ENCODE measurements at regions of chr4 and their contacts with region 1.

Region 1: DNA sequence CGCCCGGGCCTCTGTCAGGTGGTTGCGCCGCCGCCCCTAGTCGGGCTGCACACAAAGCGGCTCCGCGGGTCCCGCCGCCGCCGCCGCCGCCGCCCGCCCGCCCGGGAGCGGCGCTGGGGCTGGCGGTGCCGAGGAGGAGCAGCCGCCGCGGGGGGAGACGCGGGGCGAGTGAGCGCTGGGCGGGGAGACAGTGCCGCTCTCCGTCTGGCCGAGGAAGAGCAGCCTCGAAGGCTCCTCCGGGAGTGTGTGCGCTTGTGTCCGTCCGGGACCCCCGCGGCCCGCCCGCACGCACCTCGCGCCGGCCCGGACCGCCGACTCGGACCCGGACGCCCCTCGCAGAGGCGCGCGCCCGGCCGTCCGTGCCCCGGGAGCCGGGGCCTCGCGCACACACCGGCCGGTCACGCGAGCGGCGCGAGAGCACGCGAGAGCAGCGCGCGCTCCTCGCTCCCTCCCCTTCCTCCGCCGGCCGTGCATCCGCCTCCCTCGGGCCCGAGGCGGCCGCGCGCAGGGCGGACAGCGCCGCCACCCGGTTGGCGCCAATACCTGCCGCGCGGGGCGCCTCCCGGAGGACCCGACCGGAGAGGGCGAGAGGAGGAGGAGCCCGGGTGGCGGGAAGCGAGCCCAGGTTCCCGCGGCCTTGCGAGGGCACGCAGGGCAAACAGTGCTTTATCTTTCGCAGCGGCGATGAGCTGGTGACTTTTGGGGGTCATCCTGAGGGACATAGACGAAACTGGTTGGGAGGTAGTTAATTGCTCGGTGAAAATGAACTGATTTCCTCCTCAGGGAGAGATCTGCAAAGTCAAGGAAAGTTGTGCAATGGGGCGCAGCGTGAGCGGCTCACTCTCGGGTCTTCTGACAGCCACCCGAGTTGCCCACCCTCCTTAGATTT is at the start of gene PDS5A:
- DNase-seq: peak; percentile 98
- H3K4me3 Mint-ChIP-seq: peak within 1 kb of the TSS; percentile 95
- H3K27ac Mint-ChIP-seq: peak within 1 kb of the TSS; percentile 91
- H3K4me1 Mint-ChIP-seq: peaks cover 27% of the 10 kb centered on the region
- H3K27me3 Mint-ChIP-seq: no peaks in the 10 kb centered on the region
- total RNA-seq, gene PDS5A: 126 and 128 TPM in 2 replicates

Region 2: DNA sequence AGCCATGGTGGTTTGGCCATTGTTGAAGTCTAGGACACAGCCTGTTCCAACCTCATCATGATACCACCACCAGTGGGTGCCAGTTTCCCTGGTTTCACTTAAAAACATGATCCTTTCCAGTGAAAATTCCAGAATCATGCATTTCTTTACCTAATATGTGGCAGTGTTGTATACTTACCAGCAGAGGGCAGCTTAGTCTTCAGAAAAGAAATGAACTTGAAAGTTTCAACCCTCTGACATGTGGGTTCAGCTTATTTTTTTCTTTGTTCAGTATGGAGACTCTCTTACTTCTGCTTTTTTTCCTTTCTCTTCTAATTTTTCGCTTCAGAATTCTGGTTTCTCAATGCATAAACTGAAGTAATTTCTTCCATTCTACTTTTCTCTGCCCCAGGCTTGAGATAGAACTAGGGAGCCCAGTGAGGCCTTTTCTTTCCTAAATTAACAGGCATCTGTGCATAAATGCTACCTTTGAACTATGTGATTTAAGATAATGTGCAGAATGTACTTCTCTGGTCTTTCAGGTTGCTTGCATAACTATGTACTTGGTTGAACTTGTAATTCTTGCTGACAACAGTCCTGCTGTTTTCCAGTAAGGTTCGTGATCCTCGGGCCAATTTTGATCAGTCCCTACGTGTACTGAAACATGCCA is 508.2 kb before region 1 on chr4:
- intact Hi-C with region 1: loop called (anchors 1 kb)
- DNase-seq: peak; percentile 72
- H3K4me3 Mint-ChIP-seq: no peak overlapping the region
- H3K27ac Mint-ChIP-seq: peak overlapping the region; percentile 72
- H3K4me1 Mint-ChIP-seq: peaks cover 5% of the 10 kb centered on the region
- H3K27me3 Mint-ChIP-seq: no peaks in the 10 kb centered on the region

Region 3: GRCh38 chr4:39587881-39588280 is 389.9 kb before region 1 on chr4:
- intact Hi-C with region 1: no loop called
- DNase-seq: no peak
- H3K4me3 Mint-ChIP-seq: no peak overlapping the region
- H3K27ac Mint-ChIP-seq: no peak overlapping the region
- H3K4me1 Mint-ChIP-seq: no peaks in the 10 kb centered on the region
- H3K27me3 Mint-ChIP-seq: peaks cover 2% of the 10 kb centered on the region

Region 4: GRCh38 chr4:39638354-39639240 is 339.1 kb before region 1 on chr4 and contains the start of gene SMIM14:
- intact Hi-C with region 1: loop called (anchors 2 kb)
- DNase-seq: peak; percentile 97
- H3K4me3 Mint-ChIP-seq: peak within 1 kb of the TSS; percentile 90
- H3K27ac Mint-ChIP-seq: peak within 1 kb of the TSS; percentile 69
- H3K4me1 Mint-ChIP-seq: peaks cover 31% of the 10 kb centered on the region
- H3K27me3 Mint-ChIP-seq: peaks cover 31% of the 10 kb centered on the region
- total RNA-seq, gene SMIM14: 1.0 and 2.0 TPM in 2 replicates

Region 5: DNA sequence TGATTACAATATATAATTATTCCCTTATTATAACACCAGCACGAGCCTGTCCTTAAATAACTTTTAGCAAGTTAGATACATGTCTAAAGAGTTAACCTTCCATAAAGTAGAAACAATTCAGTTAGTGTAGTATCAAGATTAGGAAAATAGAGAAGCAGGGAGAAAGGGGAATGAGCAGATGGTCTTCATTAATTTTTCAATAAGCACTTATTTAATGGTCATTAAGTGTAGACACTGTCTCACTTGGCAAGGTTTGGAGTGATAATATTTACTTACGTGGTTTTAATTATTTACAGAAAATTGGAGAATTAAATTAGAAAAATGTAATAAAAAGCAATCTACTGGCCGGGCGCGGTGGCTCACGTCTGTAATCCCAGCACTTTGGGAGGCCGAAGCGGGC is 99.8 kb before region 1 on chr4:
- intact Hi-C with region 1: loop called (anchors 5 kb)
- DNase-seq: no peak
- H3K4me3 Mint-ChIP-seq: no peak overlapping the region
- H3K27ac Mint-ChIP-seq: no peak overlapping the region
- H3K4me1 Mint-ChIP-seq: peaks cover 26% of the 10 kb centered on the region
- H3K27me3 Mint-ChIP-seq: no peaks in the 10 kb centered on the region

Region 6: GRCh38 chr4:39933671-39934590 is 43.8 kb before region 1 on chr4:
- intact Hi-C with region 1: loop called (anchors 2 kb)
- DNase-seq: no peak
- H3K4me3 Mint-ChIP-seq: peak overlapping the region; percentile 21
- H3K27ac Mint-ChIP-seq: peak overlapping the region; percentile 37
- H3K4me1 Mint-ChIP-seq: peaks cover 42% of the 10 kb centered on the region
- H3K27me3 Mint-ChIP-seq: no peaks in the 10 kb centered on the region

Region 7: DNA sequence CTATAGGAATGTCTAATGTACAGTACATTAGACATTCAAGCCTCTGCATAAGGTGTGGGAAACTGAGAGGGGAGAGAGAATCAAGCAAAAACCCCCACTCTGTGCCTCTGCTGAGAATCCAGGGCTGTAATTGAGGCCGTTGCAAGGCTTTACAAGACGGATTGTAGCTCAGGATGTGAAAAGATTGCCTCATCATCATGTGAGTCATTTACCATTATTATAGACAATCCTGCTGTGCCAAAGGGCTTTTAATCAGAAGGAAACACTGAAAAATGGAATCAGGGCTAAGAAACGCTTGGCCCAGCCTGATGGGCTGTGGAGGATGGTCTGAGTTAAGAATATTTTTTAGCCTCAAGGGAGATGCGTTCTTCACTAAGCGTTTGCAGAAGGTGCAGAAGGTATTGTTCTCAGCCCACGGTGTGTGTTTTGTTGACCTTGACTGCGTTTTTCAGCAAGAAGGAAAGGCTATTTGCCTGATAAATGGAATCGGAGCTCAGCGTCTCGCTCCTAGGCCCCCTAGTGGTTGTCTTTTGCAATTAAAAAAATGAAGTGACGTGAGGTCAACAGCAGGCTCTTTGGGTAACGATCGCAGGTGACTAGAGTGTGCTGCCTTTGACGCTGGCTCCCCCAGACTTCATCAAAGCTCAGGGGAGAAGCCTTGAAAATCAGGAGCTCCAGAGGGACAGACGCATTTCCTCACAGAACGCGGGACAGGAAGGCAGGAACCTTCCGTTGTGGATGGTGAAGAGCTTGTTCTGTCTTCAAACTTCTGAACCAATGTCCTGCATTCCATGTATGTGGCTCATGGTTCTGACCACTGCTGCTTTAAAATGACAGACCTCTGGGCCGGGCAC is 339.3 kb after region 1 on chr4:
- intact Hi-C with region 1: loop called (anchors 5 kb)
- DNase-seq: peak; percentile 91
- H3K4me3 Mint-ChIP-seq: peak overlapping the region; percentile 91
- H3K27ac Mint-ChIP-seq: peak overlapping the region; percentile 100
- H3K4me1 Mint-ChIP-seq: peaks cover 48% of the 10 kb centered on the region
- H3K27me3 Mint-ChIP-seq: no peaks in the 10 kb centered on the region